ENCODE measurements at regions of chrX and their contacts with region 1.

Region 1: DNA sequence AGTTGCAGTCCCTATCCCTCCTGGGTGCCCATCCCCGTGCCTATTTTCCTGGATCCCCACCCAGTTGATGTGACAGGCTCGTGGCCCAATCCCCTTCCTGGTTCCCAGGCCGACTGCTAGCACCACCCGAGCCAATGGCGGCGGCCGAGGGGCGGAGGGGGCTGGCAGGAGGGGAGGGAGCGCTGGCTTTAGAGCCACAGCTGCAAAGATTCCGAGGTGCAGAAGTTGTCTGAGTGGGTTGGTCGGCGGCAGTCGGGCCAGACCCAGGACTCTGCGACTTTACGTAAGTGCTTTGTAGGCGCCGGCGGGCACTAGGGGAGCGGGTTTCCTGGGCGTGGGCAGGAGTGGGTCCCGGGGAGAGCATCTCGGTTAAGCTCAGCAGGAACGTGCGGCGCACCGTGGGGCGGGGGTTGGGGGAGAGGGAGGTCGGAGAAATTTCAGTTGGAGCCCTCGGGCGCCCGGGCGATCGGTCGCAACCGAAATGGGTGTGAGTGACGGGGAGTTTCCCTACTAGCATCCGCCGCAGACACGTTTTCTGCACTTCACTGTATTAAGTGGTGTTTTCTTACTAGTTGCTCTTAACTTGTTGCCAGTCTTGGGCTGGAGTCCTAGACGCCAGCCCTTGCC is at the start of gene PLS3:
- DNase-seq: peak; percentile 94
- total RNA-seq, gene PLS3: 172 to 332 TPM

Region 2: DNA sequence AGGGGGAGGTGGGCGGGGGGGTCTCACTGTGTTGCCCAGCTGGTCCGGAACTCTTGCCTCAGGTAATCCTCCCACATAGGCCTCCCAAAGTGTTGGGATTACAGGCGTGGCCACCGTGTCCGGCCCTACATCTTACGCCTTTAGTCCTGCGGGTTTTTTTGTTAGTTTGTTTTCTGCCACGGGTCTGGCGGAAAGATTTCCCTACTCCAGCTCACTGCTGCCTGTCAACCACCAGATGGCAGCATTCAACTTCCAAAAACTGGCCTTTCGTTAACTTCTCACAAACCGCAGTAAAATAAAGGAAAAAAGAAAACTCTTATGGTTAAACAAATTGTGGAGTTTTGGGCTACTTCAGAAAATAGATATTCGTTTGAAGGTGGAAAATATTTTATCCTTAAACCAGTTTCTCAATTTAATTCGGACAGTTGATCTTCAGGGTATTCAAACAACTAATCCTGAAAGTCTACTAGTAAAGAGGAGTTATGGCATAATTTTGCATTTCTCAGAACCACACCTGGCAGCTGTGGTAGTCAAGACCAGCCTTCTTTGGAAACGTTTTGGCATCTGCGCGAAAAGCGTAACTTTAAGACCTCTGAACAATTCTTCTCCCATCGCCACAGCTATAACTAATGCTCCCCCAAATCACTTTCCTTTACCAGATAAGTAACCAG is 230.5 kb before region 1 on chrX:
- intact Hi-C with region 1: loop called in 1 of 2 experiments (anchors 10 kb)
- DNase-seq: no peak

Region 3: GRCh38 chrX:115449742-115450141 is 111.3 kb before region 1 on chrX:
- intact Hi-C with region 1: loop called in 1 of 2 experiments (anchors 10 kb)
- DNase-seq: no peak

Region 4: DNA sequence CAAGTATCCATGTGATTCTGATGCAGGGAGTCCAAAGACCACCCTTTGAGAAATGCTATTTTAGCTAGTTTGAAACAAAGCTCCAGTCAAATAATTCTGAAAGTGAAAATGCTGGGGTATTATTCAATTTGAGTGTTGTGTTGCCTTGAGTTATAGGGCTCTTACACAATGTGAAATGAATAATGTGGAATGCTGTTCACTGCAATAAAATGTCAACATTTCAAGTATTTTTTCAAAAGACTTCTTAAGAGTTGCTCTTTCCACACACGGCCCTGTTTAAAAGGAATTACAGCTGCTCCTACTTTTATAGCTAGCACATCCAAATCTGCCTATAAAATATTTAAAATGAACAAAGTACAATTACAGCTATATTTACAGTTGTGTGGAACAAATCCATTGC is 27.6 kb before region 1 on chrX:
- intact Hi-C with region 1: no loop called
- DNase-seq: no peak

Region 5: DNA sequence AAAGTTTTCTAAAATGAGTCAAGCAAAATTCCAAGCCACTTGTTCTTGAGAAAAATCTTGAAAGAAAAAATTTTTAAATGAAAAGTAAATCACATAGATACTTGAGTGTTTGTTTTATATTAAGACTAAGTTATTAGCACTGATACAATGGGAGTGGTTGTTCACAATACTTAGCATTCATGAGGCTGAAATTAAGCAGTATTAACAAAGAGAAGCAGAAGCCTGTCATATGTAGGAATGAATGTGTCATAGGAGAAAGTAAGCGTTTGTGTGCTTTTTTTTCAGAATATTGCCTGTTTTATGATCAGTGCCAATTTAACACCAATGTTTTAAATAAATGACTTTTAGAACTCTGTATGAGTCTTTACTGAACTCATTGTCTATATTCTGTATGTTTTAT is 37.5 kb after region 1 on chrX:
- intact Hi-C with region 1: loop called in 1 of 2 experiments (anchors 2 kb)
- DNase-seq: no peak